ENCODE measurements at regions of chr17 and their contacts with region 1.

Region 1: GRCh38 chr17:58447039-58447975 is 30.0 kb upstream of the RNF43 start:
- DNase-seq: peak; percentile 86
- H3K4me3 Mint-ChIP-seq: no peak overlapping the region
- H3K27ac Mint-ChIP-seq: no peak overlapping the region
- H3K4me1 Mint-ChIP-seq: peaks cover 4% of the 10 kb centered on the region
- H3K27me3 Mint-ChIP-seq: no peaks in the 10 kb centered on the region

Region 2: DNA sequence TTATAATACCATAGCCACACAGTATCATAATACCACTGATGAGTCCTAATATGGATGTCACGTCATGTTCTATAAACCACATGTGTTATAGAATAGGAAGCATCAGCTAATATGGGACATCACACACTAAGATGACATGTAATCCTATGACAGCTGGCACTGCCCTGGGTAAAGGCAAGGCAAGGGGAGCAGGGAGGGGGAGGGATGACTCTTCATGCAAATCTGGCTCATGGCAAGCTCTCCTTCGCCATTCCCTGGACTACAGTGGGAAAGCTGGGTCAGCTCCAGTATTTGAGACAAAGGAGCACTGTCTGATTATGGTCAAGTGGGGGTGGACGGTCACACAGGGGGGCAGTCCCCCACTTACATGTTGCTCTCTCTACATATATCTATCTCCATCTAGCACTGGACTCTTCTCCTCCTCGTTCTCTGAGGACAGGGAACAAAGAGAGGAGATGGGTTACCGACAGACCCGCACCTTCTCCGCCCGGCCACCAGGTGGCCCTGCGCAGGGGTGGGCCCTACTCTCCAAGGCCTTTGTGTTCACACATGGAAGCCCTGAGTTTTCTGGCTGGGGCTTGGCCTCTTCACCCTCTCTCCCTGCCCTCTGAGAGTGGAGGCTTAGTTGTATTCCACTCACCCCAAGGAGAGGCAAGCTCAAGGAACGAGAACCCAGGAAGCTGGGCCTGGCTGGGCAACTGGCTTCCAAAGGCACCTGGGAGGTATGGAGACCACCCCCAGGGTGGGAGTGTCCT is 143.2 kb before region 1 on chr17:
- CTCF ChIA-PET with region 1: interaction called, 10 read pairs
- DNase-seq: peak; percentile 72
- H3K4me3 Mint-ChIP-seq: no peak overlapping the region
- H3K27ac Mint-ChIP-seq: no peak overlapping the region
- H3K4me1 Mint-ChIP-seq: no peaks in the 10 kb centered on the region
- H3K27me3 Mint-ChIP-seq: no peaks in the 10 kb centered on the region

Measured in activated naive CD4-positive, alpha-beta T cell treated with anti-CD3 and anti-CD28 coated beads, Interleukin-2, amount 10 ng/mL, durations not matched to agents 7 days and 5 days (primary cell).